ENCODE measurements at regions of chr3 and their contacts with region 1.

Region 1: DNA sequence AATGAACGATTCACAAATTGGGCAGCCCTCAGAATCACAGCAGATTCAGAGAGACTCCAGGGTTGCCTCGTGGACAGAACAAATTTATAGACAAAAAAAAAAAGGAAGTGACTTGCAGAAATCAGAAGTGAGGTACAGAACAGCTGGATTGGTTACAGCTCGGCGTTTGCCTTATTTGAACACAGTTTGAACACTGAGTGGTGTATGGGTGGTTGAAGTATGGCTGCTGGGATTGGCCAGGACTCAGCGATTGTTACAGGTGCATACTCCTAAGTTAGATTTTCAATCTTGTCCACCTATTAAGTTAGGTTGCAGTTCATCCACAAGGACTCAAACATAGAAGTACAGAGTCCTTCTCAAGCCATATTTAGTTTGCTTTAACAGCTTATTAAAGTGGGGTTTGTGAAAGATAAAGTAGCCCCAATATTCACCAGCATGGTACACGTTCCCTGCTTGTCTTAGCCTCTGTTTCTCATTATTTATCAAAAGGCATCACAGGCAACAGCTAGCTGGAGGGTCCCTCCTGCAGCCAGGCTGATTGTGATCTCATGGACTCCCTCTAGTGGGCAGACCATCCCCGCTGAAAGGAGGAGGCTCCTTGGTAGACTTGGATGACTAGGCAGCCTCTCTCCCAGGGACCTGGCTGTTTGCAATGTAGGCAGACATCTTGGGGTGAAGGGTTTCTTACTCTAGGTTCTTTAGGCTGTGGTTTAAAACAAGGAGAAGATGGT is 17.6 kb upstream of the ALDH1L1 start:
- DNase-seq: peak in 6 of 9 donors; percentile 1 to 34 (median 20)
- ATAC-seq: peak; percentile 73
- H3K4me3 ChIP-seq: no peak overlapping the region
- H3K4me3 Mint-ChIP-seq: no peak overlapping the region
- H3K27ac ChIP-seq: no peak overlapping the region
- H3K27ac Mint-ChIP-seq: no peak overlapping the region
- H3K4me1 ChIP-seq: no peaks in the 10 kb centered on the region
- H3K4me1 Mint-ChIP-seq: no peaks in the 10 kb centered on the region
- H3K27me3 ChIP-seq: no peaks in the 10 kb centered on the region
- H3K27me3 Mint-ChIP-seq: peaks cover 9 to 27% (median 15%) of the 10 kb centered on the region in 5 donors

Region 2: GRCh38 chr3:125967138-125967537 is 230.9 kb before region 1 on chr3:
- CTCF ChIA-PET with region 1: no interaction called
- POLR2A ChIA-PET with region 1: no interaction called
- intact Hi-C with region 1: loop called (anchors 2 to 5 kb)
- DNase-seq: no peak
- ATAC-seq: no peak
- H3K4me3 ChIP-seq: no peak overlapping the region
- H3K4me3 Mint-ChIP-seq: no peak overlapping the region
- H3K27ac ChIP-seq: no peak overlapping the region
- H3K27ac Mint-ChIP-seq: no peak overlapping the region
- H3K4me1 ChIP-seq: peaks cover 2 to 5% of the 10 kb centered on the region in 2 donors
- H3K4me1 Mint-ChIP-seq: peaks cover 0 to 4% (median 4%) of the 10 kb centered on the region in 7 donors
- H3K27me3 ChIP-seq: peaks cover 3 to 6% of the 10 kb centered on the region in 2 donors
- H3K27me3 Mint-ChIP-seq: peaks cover 16 to 24% (median 22%) of the 10 kb centered on the region in 5 donors

Measured in naive thymus-derived CD4-positive, alpha-beta T cell (primary cell).